Endothelial cell of umbilical vein (primary cell): ENCODE measurements at regions of chr11 and their contacts with region 1.

Region 1: GRCh38 chr11:95923728-95924413 is at the start of gene MTMR2:
- DNase-seq: peak; percentile 82
- H3K4me3 ChIP-seq: peak within 1 kb of the TSS; percentile 92 to 99 (median 98)
- H3K27ac ChIP-seq: peak within 1 kb of the TSS; percentile 75
- H3K4me1 ChIP-seq: peaks cover 32% of the 10 kb centered on the region
- H3K27me3 ChIP-seq: no peaks in the 10 kb centered on the region
- CTCF ChIP-seq: no peak
- POLR2A ChIP-seq: peak; percentile 97
- total RNA-seq, gene MTMR2: 46.4 and 49.5 TPM in 2 replicates

Region 2: GRCh38 chr11:95977534-95978174 is 53.8 kb after region 1 on chr11:
- CTCF ChIA-PET with region 1: interaction called, 3 read pairs
- POLR2A ChIA-PET with region 1: no interaction called
- dilution Hi-C with region 1: no loop called
- intact Hi-C with region 1: loop called (anchors 2 kb)
- DNase-seq: peak; percentile 78
- H3K4me3 ChIP-seq: no peak overlapping the region
- H3K27ac ChIP-seq: peak overlapping the region; percentile 74
- H3K4me1 ChIP-seq: peaks cover 22% of the 10 kb centered on the region
- H3K27me3 ChIP-seq: no peaks in the 10 kb centered on the region
- CTCF ChIP-seq: no peak
- POLR2A ChIP-seq: no peak